Activated CD4-positive, alpha-beta T cell treated with anti-CD3 and anti-CD28 coated beads for 36 hours (primary cell): ENCODE measurements at regions of chr9 and their contacts with region 1.

Region 1: DNA sequence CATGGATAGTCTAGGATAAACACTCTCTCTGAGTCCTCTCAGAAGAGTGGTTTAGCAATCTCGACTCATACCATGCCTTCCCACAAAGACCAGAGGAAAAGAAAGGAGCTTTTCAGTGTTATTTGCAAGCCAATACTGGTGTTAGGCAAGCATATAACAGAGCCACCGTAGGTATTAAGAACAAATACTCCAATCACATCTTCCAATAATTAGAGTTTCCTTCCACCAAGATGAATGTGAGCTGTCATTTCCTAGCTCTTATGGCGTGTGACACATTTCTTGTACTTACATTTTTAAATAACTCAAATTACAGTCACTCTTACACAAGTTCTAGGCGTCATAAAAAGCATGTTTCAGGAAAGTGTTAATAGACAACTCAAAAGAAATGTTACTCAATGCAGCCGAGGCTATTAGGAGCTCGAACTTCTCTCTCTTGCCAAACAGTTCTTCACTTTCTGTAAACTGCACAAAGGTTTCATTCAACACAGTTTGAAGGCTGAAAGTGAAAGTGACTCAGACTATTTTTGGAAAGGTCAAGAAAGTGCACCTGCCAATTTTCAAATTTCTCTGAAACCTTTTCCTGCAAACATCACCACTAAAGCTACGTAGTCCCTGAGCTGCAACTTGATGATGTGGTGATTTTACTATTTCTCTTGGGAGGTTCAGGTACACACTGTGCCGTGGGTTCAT is 153.8 kb downstream of the AUH start:
- DNase-seq: peak; percentile 51
- ATAC-seq: peak; percentile 80
- H3K4me3 Mint-ChIP-seq: peak overlapping the region; percentile 36
- H3K27ac Mint-ChIP-seq: peak overlapping the region; percentile 98
- H3K4me1 Mint-ChIP-seq: peaks cover 75% of the 10 kb centered on the region
- H3K27me3 Mint-ChIP-seq: no peaks in the 10 kb centered on the region

Region 2: DNA sequence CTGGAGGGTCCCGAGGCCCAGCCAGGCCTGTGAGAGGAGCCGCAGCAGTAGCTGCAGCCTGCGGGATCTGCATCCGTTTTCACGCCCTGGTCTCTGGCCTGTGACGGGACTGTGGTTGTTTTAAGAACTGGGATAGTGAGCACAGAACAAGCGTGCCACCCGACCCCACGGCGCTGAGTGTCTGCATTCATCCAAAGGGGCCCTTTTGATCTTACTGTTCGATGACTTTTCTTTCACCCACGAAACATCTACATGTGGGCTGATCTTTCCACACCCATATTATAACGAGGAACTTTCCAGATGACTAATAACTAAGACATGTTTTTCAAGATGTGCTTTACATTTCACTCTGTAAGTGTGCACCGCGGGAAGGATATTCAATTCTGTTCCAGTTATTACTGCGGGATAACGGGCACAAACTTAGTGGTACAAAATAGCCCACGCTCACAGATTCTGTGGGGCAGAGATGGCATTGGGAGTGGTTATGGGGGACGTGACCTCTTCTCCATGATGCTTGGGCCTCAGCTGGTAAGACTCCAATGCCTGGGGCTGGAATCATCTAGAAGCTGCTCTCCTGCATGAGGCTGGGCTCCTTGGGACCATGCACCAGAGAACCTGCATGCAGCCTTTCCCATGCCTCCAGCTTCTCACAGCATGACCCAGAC is 241.3 kb before region 1 on chr9:
- CTCF ChIA-PET with region 1: no interaction called
- POLR2A ChIA-PET with region 1: no interaction called
- intact Hi-C with region 1: no loop called
- DNase-seq: peak; percentile 71
- ATAC-seq: peak; percentile 88
- H3K4me3 Mint-ChIP-seq: peak overlapping the region; percentile 3
- H3K27ac Mint-ChIP-seq: peak overlapping the region; percentile 52
- H3K4me1 Mint-ChIP-seq: peaks cover 37% of the 10 kb centered on the region
- H3K27me3 Mint-ChIP-seq: peaks cover 25% of the 10 kb centered on the region

Region 3: GRCh38 chr9:91047993-91048607 is 159.8 kb before region 1 on chr9:
- CTCF ChIA-PET with region 1: no interaction called
- POLR2A ChIA-PET with region 1: no interaction called
- intact Hi-C with region 1: loop called (anchors 1 to 2 kb)
- DNase-seq: peak; percentile 75
- ATAC-seq: peak; percentile 83
- H3K4me3 Mint-ChIP-seq: peak overlapping the region; percentile 46
- H3K27ac Mint-ChIP-seq: peak overlapping the region; percentile 96
- H3K4me1 Mint-ChIP-seq: peaks cover 82% of the 10 kb centered on the region
- H3K27me3 Mint-ChIP-seq: peaks cover 23% of the 10 kb centered on the region

Region 4: DNA sequence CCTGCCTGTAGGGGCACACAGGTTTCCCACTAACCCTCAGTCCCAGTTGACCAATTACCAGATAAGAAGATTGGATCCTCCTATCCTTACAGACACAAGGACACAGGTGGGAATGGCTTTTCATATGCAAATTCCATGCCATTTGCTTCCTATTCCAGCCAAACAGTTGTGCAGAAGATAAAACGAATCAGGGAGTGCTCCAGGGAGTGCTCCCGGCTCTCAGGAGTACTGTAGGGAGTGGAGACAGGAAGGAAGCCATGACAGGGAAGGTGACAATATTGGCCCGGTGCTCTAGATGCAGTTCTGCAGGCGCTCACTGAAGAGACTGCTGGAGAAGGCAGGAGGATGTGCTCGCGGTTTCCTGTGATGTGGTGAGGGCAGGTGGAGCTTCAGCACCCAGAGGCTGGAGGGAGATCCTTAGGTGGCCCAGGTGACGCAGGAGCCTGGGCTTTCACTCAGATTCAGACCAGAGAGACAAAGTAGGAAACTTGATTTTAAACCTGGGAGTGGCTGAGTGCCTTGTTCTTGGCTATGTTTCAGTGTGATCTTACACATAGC is 106.2 kb before region 1 on chr9:
- CTCF ChIA-PET with region 1: interaction called, 13 read pairs
- POLR2A ChIA-PET with region 1: interaction called, 31 read pairs
- intact Hi-C with region 1: loop called (anchors 1 kb)
- DNase-seq: peak; percentile 96
- ATAC-seq: peak; percentile 82
- H3K4me3 Mint-ChIP-seq: peak overlapping the region; percentile 81
- H3K27ac Mint-ChIP-seq: peak overlapping the region; percentile 97
- H3K4me1 Mint-ChIP-seq: peaks cover 70% of the 10 kb centered on the region
- H3K27me3 Mint-ChIP-seq: no peaks in the 10 kb centered on the region

Region 5: DNA sequence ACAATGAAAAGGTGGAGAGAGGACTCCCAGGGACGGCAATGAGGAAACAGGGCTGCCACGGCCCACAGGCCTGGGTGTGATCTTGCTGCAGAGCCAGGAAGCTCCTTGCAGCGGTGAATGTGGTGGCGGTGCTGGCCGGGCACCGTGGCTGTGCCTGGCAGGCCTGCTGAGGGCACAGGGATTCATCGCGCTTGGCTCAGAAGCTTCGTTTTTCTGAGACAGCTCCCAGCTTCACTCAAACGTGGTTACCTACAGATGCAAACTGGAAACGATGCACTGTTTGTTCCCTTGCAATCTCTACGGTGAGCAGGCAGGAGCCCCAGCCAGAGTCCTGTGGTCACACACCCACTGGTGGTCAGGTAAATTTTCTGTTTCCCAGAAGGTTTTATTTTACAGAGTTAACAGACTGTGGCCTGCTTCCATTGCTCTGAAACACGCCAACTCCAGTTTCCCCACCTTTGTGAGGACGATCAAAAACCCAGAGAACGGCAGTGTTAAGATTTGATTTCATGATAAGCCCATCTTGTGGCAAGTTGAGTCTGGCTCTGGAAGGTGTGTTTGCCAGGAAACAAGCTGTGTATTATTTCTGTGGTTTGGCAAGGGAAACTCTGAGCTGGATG is 30.1 kb before region 1 on chr9:
- CTCF ChIA-PET with region 1: interaction called, 9 read pairs
- POLR2A ChIA-PET with region 1: interaction called, 23 read pairs
- intact Hi-C with region 1: loop called in 1 of 2 experiments (anchors 1 kb)
- DNase-seq: peak; percentile 79
- ATAC-seq: peak; percentile 73
- H3K4me3 Mint-ChIP-seq: peak overlapping the region; percentile 22
- H3K27ac Mint-ChIP-seq: peak overlapping the region; percentile 99
- H3K4me1 Mint-ChIP-seq: peaks cover 64% of the 10 kb centered on the region
- H3K27me3 Mint-ChIP-seq: no peaks in the 10 kb centered on the region

Region 6: GRCh38 chr9:91245431-91246313 is 37.8 kb after region 1 on chr9:
- CTCF ChIA-PET with region 1: interaction called, 3 read pairs
- POLR2A ChIA-PET with region 1: interaction called, 6 read pairs
- intact Hi-C with region 1: loop called (anchors 1 kb)
- DNase-seq: peak; percentile 34
- ATAC-seq: peak; percentile 98
- H3K4me3 Mint-ChIP-seq: no peak overlapping the region
- H3K27ac Mint-ChIP-seq: peak overlapping the region; percentile 86
- H3K4me1 Mint-ChIP-seq: peaks cover 28% of the 10 kb centered on the region
- H3K27me3 Mint-ChIP-seq: no peaks in the 10 kb centered on the region

Region 7: DNA sequence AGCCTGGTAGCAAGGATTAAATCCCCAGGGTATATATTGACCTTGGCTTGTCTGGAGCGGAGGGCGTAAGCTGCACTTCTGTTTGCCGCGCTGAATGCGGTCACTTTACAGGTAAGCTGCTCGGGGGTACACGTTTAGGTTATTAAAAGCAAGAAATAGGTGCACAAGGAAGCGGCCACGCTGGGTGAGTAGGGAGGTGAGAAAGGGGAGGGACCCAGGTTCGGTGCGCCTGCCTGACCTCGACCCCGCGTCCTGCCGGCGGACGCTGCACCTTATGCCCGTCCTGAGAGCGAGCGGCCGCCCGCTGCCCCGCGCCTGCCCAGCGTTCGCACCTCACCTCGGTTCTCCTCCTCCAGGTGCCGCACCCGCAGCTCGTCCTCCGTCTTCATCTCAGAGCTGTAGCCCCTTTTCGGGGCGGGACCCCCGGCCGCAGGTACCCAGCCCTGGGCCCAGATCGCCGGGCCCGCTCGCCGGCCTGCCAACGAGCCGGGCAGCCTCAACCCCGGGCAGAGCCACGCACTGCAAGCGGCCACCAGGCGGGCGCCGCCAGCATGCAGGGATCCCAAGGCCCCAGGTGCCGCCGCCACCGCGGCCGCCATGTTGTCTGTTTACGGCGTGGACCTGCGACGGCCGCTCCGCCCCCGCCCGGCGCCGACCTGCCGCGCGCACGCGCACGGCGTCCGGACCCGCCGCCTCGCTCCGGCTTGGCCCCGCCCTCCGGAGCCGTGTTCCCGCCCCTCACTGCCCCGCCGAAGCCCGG is 153.6 kb after region 1 on chr9 and contains the start of gene AUH:
- CTCF ChIA-PET with region 1: interaction called, 3 read pairs
- POLR2A ChIA-PET with region 1: interaction called, 33 read pairs
- intact Hi-C with region 1: loop called in 1 of 2 experiments (anchors 1 kb)
- DNase-seq: peak; percentile 93
- ATAC-seq: peak; percentile 74
- H3K4me3 Mint-ChIP-seq: peak within 1 kb of the TSS; percentile 87
- H3K27ac Mint-ChIP-seq: peak within 1 kb of the TSS; percentile 86
- H3K4me1 Mint-ChIP-seq: peaks cover 53% of the 10 kb centered on the region
- H3K27me3 Mint-ChIP-seq: no peaks in the 10 kb centered on the region
- total RNA-seq, gene AUH: 30.4 to 30.8 TPM

Region 8: GRCh38 chr9:91711755-91712601 is 504.1 kb after region 1 on chr9:
- CTCF ChIA-PET with region 1: no interaction called
- POLR2A ChIA-PET with region 1: no interaction called
- intact Hi-C with region 1: loop called in 1 of 2 experiments (anchors 5 kb)
- DNase-seq: peak; percentile 88
- ATAC-seq: peak; percentile 97
- H3K4me3 Mint-ChIP-seq: no peak overlapping the region
- H3K27ac Mint-ChIP-seq: peak overlapping the region; percentile 26
- H3K4me1 Mint-ChIP-seq: no peaks in the 10 kb centered on the region
- H3K27me3 Mint-ChIP-seq: peaks cover 24% of the 10 kb centered on the region